ENCODE measurements at regions of chr2 and their contacts with region 1.

Region 1: DNA sequence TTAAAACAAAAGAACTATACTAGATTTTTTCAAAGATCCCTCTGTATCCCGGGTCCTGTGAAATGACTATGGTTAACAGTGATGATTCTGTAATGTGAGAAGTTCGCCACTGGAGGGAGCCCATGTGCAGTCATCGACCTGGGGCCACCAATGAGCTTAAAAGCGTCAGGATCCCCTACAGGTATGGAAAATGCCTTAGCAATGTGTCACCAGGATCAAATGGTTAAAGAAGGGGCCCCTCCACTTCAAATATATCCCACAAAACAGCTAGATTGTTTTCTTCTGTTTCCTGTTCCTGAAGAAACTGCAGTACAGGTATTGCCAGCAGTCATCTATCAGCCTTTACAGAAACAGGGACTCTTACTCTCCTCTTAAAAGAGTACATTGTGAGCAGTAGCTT is 15.3 kb downstream of the CHRNA1 start:
- DNase-seq: peak; percentile 35
- H3K4me3 ChIP-seq: no peak overlapping the region
- H3K27ac ChIP-seq: no peak overlapping the region
- H3K4me1 ChIP-seq: no peaks in the 10 kb centered on the region
- H3K27me3 ChIP-seq: no peaks in the 10 kb centered on the region
- CTCF ChIP-seq: peak in 3 of 4 experiments; percentile 50 to 58 (median 51)
- POLR2A ChIP-seq: no peak

Region 2: DNA sequence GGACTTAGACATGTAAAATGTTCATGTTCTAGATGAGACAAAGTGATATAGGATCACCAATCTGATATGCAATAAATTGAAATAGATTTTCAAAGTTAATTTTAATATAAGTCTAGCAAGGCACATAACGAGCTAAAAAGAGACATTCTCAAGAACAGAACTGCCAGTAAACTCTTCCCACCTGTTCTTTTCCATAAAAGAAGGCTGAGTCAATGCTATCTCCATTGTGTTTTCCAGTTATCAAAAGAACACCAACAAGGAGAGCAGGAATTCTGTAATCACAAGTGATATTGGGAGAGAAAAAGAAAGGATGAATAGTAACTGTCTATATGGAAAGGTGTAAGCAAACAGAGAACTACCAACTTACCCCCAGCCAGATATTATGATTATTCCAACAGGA is 287.7 kb before region 1 on chr2:
- intact Hi-C with region 1: no loop called
- DNase-seq: no peak
- H3K4me3 ChIP-seq: no peak overlapping the region
- H3K27ac ChIP-seq: no peak overlapping the region
- H3K4me1 ChIP-seq: no peaks in the 10 kb centered on the region
- H3K27me3 ChIP-seq: no peaks in the 10 kb centered on the region
- CTCF ChIP-seq: no peak
- POLR2A ChIP-seq: no peak

Region 3: DNA sequence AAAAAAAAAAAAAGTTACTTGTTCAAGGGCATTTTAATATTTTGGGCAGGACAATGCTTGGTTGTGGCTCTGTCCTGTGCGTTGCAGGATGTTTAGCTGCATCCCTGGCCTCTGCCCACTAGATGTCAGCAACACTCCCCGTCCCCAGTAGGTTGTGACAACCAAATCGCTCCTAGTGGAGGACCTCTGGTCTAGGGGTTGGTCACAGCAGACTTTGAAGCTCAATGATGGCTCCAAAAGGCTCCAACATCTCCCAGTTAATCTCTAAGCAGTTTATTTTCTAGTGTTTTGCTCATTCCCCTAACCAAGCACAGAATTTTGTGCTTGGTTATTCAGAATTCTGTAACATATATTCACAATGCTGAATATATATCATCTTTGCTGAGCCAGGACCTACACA is 51.7 kb before region 1 on chr2:
- intact Hi-C with region 1: loop called (anchors 5 kb)
- DNase-seq: no peak
- H3K4me3 ChIP-seq: no peak overlapping the region
- H3K27ac ChIP-seq: no peak overlapping the region
- H3K4me1 ChIP-seq: no peaks in the 10 kb centered on the region
- H3K27me3 ChIP-seq: no peaks in the 10 kb centered on the region
- CTCF ChIP-seq: peak in 2 of 4 experiments; percentile 52 to 58
- POLR2A ChIP-seq: no peak

Region 4: GRCh38 chr2:174992886-174993285 is 243.9 kb after region 1 on chr2:
- intact Hi-C with region 1: loop called (anchors 5 kb)
- DNase-seq: no peak
- H3K4me3 ChIP-seq: no peak overlapping the region
- H3K27ac ChIP-seq: no peak overlapping the region
- H3K4me1 ChIP-seq: no peaks in the 10 kb centered on the region
- H3K27me3 ChIP-seq: no peaks in the 10 kb centered on the region
- CTCF ChIP-seq: no peak
- POLR2A ChIP-seq: no peak